MCF 10A (cell line): ENCODE measurements at regions of chr10 and their contacts with region 1.

Region 1: GRCh38 chr10:73730153-73730906 is 13.8 kb upstream of the SEC24C start:
- DNase-seq: peak; percentile 93
- H3K4me3 Mint-ChIP-seq: peak overlapping the region; percentile 99
- H3K27ac Mint-ChIP-seq: peak overlapping the region; percentile 97
- H3K4me1 Mint-ChIP-seq: peaks cover 6% of the 10 kb centered on the region
- H3K27me3 Mint-ChIP-seq: no peaks in the 10 kb centered on the region
- CTCF ChIP-seq: no peak

Region 2: DNA sequence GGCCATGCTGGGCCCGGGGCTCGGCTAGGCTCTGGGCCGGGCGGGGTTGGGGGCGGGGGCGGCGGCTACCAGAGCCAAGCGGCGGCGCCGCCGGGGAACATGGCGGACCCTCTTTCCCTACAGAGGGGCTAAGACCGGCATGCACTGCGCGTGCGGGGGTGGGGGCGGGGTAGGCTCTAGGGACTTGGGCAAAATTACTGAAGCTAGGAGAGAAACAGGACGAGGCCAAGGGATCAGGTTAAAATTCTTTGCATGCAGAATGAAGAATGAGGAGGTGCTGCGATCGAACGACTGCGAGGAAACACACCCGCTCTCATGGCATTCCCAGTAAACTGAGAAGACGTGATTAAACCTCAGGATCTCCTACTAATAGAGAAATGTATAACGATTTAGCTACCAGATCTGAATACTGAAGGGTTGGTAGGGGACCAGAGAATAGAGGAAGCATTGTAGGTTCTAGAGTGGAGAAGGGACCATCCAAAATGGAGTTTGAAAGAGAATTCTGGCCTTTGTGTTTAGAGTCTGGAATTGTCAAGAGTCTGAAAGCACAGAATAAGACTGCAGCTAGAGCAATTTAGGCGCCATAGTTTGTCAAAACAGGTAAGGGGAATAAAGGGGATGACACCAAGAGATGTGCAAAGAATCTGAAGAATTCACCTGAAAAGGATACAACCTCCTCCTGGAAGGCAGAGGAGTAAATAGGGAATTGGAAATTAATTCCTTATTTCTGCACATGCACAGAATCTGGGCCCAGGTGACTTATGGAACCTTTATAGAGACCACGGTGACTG is 234.3 kb before region 1 on chr10 and contains the start of gene PPP3CB:
- CTCF ChIA-PET with region 1: no interaction called
- POLR2A ChIA-PET with region 1: interaction called, 23 read pairs
- intact Hi-C with region 1: no loop called
- DNase-seq: peak; percentile 95
- H3K4me3 Mint-ChIP-seq: peak within 1 kb of the TSS; percentile 86
- H3K27ac Mint-ChIP-seq: peak within 1 kb of the TSS; percentile 74
- H3K4me1 Mint-ChIP-seq: peaks cover 28% of the 10 kb centered on the region
- H3K27me3 Mint-ChIP-seq: no peaks in the 10 kb centered on the region
- CTCF ChIP-seq: no peak
- total RNA-seq, gene PPP3CB: 34.8 and 37.4 TPM in 2 replicates

Region 3: GRCh38 chr10:73717556-73717955 is 12.8 kb before region 1 on chr10:
- CTCF ChIA-PET with region 1: no interaction called
- POLR2A ChIA-PET with region 1: interaction called, 10 read pairs
- intact Hi-C with region 1: no loop called
- DNase-seq: no peak
- H3K4me3 Mint-ChIP-seq: no peak overlapping the region
- H3K27ac Mint-ChIP-seq: no peak overlapping the region
- H3K4me1 Mint-ChIP-seq: no peaks in the 10 kb centered on the region
- H3K27me3 Mint-ChIP-seq: no peaks in the 10 kb centered on the region
- CTCF ChIP-seq: no peak

Region 4: DNA sequence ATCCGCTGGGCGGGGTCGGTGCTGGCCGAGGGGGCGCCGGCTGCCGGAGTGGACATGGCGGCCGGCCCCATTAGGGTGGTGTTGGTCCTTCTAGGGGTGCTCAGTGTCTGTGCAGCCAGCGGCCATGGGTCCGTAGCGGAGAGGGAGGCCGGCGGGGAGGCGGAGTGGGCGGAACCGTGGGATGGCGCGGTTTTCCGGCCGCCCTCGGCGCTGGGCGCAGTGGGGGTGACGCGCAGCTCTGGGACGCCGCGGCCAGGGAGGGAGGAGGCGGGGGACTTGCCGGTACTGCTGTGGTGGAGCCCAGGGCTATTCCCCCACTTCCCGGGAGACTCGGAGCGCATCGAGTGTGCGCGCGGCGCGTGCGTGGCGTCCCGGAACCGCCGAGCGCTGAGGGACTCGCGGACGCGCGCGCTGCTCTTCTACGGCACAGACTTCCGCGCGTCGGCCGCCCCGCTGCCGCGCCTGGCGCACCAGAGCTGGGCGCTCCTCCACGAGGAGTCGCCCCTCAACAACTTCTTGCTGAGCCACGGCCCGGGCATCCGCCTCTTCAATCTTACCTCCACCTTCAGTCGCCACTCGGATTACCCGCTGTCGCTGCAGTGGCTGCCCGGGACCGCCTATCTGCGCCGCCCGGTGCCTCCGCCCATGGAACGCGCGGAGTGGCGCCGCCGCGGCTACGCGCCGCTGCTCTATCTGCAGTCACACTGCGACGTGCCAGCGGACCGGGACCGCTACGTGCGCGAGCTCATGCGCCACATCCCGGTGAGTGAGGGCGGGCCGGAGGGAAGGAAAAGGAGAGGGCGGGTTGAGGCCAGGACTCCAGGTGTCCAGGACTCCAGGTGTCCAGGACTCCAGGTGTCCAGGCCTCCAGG is 42.2 kb after region 1 on chr10:
- CTCF ChIA-PET with region 1: interaction called, 3 read pairs
- POLR2A ChIA-PET with region 1: interaction called, 68 read pairs
- intact Hi-C with region 1: loop called (anchors 5 kb)
- DNase-seq: peak; percentile 73
- H3K4me3 Mint-ChIP-seq: peak overlapping the region; percentile 92
- H3K27ac Mint-ChIP-seq: peak overlapping the region; percentile 79
- H3K4me1 Mint-ChIP-seq: peaks cover 31% of the 10 kb centered on the region
- H3K27me3 Mint-ChIP-seq: no peaks in the 10 kb centered on the region
- CTCF ChIP-seq: no peak

Region 5: DNA sequence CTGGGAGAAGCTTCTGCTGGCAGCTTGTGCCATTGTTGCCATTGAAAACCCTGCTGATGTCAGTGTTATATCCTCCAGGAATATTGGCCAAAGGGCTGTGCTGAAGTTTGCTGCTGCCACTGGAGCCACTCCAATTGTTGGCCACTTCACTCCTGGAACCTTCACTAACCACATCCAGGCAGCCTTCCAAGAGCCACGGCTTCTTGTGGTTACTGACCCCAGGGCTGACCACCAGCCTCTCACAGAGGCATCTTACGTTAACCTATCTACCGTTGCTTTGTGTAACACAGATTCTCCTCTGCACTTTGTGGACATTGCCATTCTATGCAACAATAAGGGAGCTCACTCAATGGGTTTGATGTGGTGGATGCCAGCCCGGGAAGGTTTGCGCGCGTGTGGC is 641.4 kb after region 1 on chr10:
- CTCF ChIA-PET with region 1: no interaction called
- POLR2A ChIA-PET with region 1: no interaction called
- intact Hi-C with region 1: no loop called
- DNase-seq: no peak
- H3K4me3 Mint-ChIP-seq: no peak overlapping the region
- H3K27ac Mint-ChIP-seq: no peak overlapping the region
- H3K4me1 Mint-ChIP-seq: no peaks in the 10 kb centered on the region
- H3K27me3 Mint-ChIP-seq: no peaks in the 10 kb centered on the region
- CTCF ChIP-seq: no peak